CD4-positive, alpha-beta T cell (primary cell): ENCODE measurements at regions of chr19 and their contacts with region 1.

Region 1: GRCh38 chr19:7680606-7681339 is at the start of gene TRAPPC5:
- DNase-seq: peak; percentile 76 to 95 (median 84)
- ATAC-seq: peak; percentile 40
- H3K4me3 ChIP-seq: peak within 1 kb of the TSS; percentile 100
- H3K4me3 Mint-ChIP-seq: peak within 1 kb of the TSS; percentile 97
- H3K27ac ChIP-seq: peak within 1 kb of the TSS; percentile 72 to 83
- H3K27ac Mint-ChIP-seq: peak within 1 kb of the TSS; percentile 90
- H3K4me1 ChIP-seq: peaks cover 58% of the 10 kb centered on the region
- H3K4me1 Mint-ChIP-seq: peaks cover 44% of the 10 kb centered on the region
- H3K27me3 ChIP-seq: peaks cover 9 to 12% of the 10 kb centered on the region in 2 experiments
- H3K27me3 Mint-ChIP-seq: peaks cover 29% of the 10 kb centered on the region
- CTCF ChIP-seq: peak; percentile 93
- total RNA-seq, gene TRAPPC5: 41.3 to 43.4 TPM

Region 2: DNA sequence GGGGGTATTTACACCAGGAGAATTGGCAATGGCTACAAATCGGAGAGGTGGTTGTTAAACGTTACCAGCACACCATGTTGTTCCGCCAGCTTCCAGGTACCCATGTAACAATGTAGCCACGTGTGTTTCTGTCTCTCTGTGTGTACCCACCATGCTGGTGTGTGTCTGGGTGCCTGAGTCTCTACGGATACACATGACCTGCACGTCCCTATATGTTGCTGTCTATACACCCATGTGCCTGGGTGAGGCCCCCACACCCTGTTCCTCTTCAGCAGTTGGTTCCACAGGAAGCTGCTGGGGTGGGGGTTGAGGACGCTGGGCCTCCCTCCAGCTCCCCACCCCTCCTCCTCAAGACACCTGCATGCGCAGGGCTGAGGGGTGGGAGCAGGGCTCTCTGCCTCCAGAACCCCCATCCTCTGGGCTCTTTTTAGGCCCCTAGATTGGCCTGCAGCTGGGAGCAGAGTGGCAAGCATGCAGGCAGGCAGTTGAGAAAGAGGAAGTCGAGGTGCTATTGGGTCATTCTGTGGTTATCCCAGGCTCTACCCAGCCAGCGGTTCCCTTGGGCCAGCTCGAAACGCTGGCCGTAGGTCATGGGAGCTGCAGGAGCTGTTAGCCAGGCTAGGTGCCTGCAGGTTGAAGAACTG is 332.1 kb before region 1 on chr19 and contains the start of gene ARHGEF18:
- CTCF ChIA-PET with region 1: no interaction called
- POLR2A ChIA-PET with region 1: interaction called, 3 read pairs
- intact Hi-C with region 1: loop called in 1 of 2 experiments (anchors 10 kb)
- DNase-seq: peak; percentile 34 to 94 (median 72)
- ATAC-seq: peak; percentile 73
- H3K4me3 ChIP-seq: peak within 1 kb of the TSS; percentile 84
- H3K4me3 Mint-ChIP-seq: peak within 1 kb of the TSS; percentile 99
- H3K27ac ChIP-seq: peak within 1 kb of the TSS; percentile 63 to 74
- H3K27ac Mint-ChIP-seq: peak within 1 kb of the TSS; percentile 92
- H3K4me1 ChIP-seq: peaks cover 78% of the 10 kb centered on the region
- H3K4me1 Mint-ChIP-seq: peaks cover 74% of the 10 kb centered on the region
- H3K27me3 ChIP-seq: no peaks in the 10 kb centered on the region
- H3K27me3 Mint-ChIP-seq: no peaks in the 10 kb centered on the region
- CTCF ChIP-seq: no peak
- total RNA-seq, gene ARHGEF18: 121 TPM

Region 3: DNA sequence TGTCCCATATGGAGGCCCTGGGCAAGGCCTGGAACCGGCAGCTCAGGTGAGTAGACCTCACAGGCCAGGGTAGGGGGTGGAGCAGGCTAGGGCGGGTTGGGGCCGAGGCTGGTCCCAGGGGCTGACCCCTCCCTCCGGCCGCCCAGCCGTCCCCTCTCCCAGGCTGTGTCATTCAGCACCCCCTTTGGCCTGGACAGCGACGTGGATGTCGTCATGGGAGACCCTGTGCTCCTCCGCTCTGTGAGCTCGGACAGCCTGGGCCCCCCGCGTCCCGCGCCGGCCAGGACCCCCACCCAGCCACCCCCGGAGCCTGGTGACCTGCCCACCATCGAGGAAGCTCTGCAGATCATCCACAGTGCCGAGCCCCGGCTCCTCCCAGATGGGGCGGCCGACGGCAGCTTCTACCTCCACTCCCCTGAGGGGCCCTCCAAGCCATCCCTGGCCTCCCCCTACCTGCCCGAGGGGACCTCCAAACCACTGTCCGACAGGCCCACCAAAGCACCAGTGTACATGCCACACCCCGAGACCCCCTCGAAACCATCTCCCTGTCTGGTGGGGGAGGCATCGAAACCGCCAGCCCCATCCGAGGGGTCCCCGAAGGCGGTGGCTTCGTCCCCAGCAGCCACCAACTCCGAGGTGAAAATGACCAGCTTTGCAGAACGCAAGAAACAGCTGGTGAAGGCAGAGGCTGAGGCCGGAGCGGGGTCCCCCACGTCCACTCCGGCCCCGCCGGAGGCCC is 69.1 kb before region 1 on chr19:
- CTCF ChIA-PET with region 1: no interaction called
- POLR2A ChIA-PET with region 1: no interaction called
- intact Hi-C with region 1: no loop called
- DNase-seq: no peak
- ATAC-seq: no peak
- H3K4me3 ChIP-seq: no peak overlapping the region
- H3K4me3 Mint-ChIP-seq: no peak overlapping the region
- H3K27ac ChIP-seq: no peak overlapping the region
- H3K27ac Mint-ChIP-seq: no peak overlapping the region
- H3K4me1 ChIP-seq: peaks cover 2% of the 10 kb centered on the region
- H3K4me1 Mint-ChIP-seq: no peaks in the 10 kb centered on the region
- H3K27me3 ChIP-seq: no peaks in the 10 kb centered on the region
- H3K27me3 Mint-ChIP-seq: no peaks in the 10 kb centered on the region
- CTCF ChIP-seq: no peak

Region 4: DNA sequence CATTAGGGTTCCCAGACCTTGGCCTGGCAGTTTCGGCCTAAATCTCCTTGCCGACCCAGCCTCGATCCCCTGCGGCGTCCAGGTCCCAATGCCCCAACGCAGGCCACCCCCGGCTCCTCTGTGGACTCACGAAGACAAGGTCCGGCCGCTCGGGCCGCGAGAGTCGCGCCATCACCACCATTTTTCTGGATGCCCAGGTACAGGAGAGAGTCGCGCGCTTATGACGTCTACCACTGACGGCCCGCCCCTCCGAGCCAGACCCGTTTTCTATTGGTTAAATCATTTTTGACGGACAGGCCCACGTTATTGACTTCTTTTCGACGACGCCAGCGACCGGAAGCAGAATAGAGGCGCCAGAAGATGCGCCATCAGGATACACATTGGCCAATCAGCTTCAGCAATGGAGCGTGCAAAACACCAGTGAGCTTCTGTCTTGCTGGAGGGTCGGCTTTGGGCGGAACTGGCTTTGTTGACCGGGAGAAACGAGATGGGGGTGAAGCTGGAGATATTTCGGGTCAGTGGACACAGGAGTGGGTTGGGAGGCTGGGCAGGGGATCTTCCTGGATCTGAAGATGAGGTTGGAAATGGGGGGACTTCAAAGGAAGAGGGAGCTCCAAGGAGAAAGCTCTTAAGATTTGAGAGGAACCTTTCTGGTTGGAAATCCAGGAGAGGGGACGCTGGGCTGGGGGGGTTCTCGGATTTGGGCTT is 51.3 kb before region 1 on chr19 and contains the starts of genes PET100 and XAB2:
- CTCF ChIA-PET with region 1: interaction called, 20 read pairs
- POLR2A ChIA-PET with region 1: interaction called, 14 read pairs
- intact Hi-C with region 1: loop called in 1 of 2 experiments (anchors 2 kb)
- DNase-seq: peak; percentile 88 to 99 (median 94)
- ATAC-seq: peak; percentile 97
- H3K4me3 ChIP-seq: peak within 1 kb of the TSS; percentile 72
- H3K4me3 Mint-ChIP-seq: peak within 1 kb of the TSS; percentile 95
- H3K27ac ChIP-seq: peak within 1 kb of the TSS; percentile 92 to 94
- H3K27ac Mint-ChIP-seq: peak within 1 kb of the TSS; percentile 96
- H3K4me1 ChIP-seq: peaks cover 44% of the 10 kb centered on the region
- H3K4me1 Mint-ChIP-seq: peaks cover 34% of the 10 kb centered on the region
- H3K27me3 ChIP-seq: no peaks in the 10 kb centered on the region
- H3K27me3 Mint-ChIP-seq: no peaks in the 10 kb centered on the region
- CTCF ChIP-seq: no peak
- total RNA-seq, gene PET100: 178 to 188 TPM
- total RNA-seq, gene XAB2: 118 to 121 TPM

Region 5: GRCh38 chr19:7657131-7657751 is 23.5 kb before region 1 on chr19:
- CTCF ChIA-PET with region 1: interaction called, 17 read pairs
- POLR2A ChIA-PET with region 1: interaction called, 6 read pairs
- intact Hi-C with region 1: loop called (anchors 1 to 2 kb)
- DNase-seq: peak in 4 of 14 experiments; percentile 19 to 73 (median 44)
- ATAC-seq: no peak
- H3K4me3 ChIP-seq: no peak overlapping the region
- H3K4me3 Mint-ChIP-seq: no peak overlapping the region
- H3K27ac ChIP-seq: peak overlapping the region in 1 of 2 donors; percentile 30
- H3K27ac Mint-ChIP-seq: peak overlapping the region; percentile 72
- H3K4me1 ChIP-seq: peaks cover 28% of the 10 kb centered on the region
- H3K4me1 Mint-ChIP-seq: peaks cover 21% of the 10 kb centered on the region
- H3K27me3 ChIP-seq: no peaks in the 10 kb centered on the region
- H3K27me3 Mint-ChIP-seq: no peaks in the 10 kb centered on the region
- CTCF ChIP-seq: no peak

Region 6: GRCh38 chr19:7799640-7800355 is 119.0 kb after region 1 on chr19:
- CTCF ChIA-PET with region 1: interaction called, 30 read pairs
- POLR2A ChIA-PET with region 1: interaction called, 17 read pairs
- intact Hi-C with region 1: loop called (anchors 1 kb)
- DNase-seq: peak; percentile 17 to 81 (median 48)
- ATAC-seq: no peak
- H3K4me3 ChIP-seq: no peak overlapping the region
- H3K4me3 Mint-ChIP-seq: no peak overlapping the region
- H3K27ac ChIP-seq: no peak overlapping the region
- H3K27ac Mint-ChIP-seq: no peak overlapping the region
- H3K4me1 ChIP-seq: peaks cover 9% of the 10 kb centered on the region
- H3K4me1 Mint-ChIP-seq: peaks cover 6% of the 10 kb centered on the region
- H3K27me3 ChIP-seq: peaks cover 7 to 10% of the 10 kb centered on the region in 2 experiments
- H3K27me3 Mint-ChIP-seq: peaks cover 33% of the 10 kb centered on the region
- CTCF ChIP-seq: peak; percentile 76